H1 (cell line): ENCODE measurements at regions of chr13 and their contacts with region 1.

Region 1: GRCh38 chr13:113208424-113209335 is at the start of gene PCID2:
- DNase-seq: peak; percentile 66 to 98
- H3K4me3 ChIP-seq: peak within 1 kb of the TSS; percentile 77 to 93 (median 84)
- H3K27ac ChIP-seq: peak within 1 kb of the TSS; percentile 97
- H3K4me1 ChIP-seq: peaks cover 2 to 7% (median 3%) of the 10 kb centered on the region in 4 experiments; a peak in 5 of 7 replicates
- H3K27me3 ChIP-seq: no peaks in the 10 kb centered on the region
- CTCF ChIP-seq: 0 out of 4 replicates have a peak, but pooled peaks of 1 of the 3 experiments have one; percentile 9
- EP300 ChIP-seq: peak; percentile 47 to 84; a peak in 2 of 3 replicates
- POLR2A ChIP-seq: peak; percentile 89 to 90
- RAD21 ChIP-seq: no peak
- total RNA-seq, gene PCID2: 72.8 and 75.1 TPM in 2 replicates

Region 2: GRCh38 chr13:112685891-112686290 is 522.8 kb before region 1 on chr13:
- CTCF ChIA-PET with region 1: no interaction called
- POLR2A ChIA-PET with region 1: no interaction called
- DNase-seq: no peak
- H3K4me3 ChIP-seq: no peak overlapping the region
- H3K27ac ChIP-seq: no peak overlapping the region
- H3K4me1 ChIP-seq: peaks cover 3 to 11% (median 9%) of the 10 kb centered on the region in 4 experiments
- H3K27me3 ChIP-seq: peaks cover 0 to 2% (median 0%) of the 10 kb centered on the region in 4 experiments; a peak in 2 of 7 replicates
- CTCF ChIP-seq: no peak
- EP300 ChIP-seq: no peak
- POLR2A ChIP-seq: no peak
- RAD21 ChIP-seq: no peak

Region 3: DNA sequence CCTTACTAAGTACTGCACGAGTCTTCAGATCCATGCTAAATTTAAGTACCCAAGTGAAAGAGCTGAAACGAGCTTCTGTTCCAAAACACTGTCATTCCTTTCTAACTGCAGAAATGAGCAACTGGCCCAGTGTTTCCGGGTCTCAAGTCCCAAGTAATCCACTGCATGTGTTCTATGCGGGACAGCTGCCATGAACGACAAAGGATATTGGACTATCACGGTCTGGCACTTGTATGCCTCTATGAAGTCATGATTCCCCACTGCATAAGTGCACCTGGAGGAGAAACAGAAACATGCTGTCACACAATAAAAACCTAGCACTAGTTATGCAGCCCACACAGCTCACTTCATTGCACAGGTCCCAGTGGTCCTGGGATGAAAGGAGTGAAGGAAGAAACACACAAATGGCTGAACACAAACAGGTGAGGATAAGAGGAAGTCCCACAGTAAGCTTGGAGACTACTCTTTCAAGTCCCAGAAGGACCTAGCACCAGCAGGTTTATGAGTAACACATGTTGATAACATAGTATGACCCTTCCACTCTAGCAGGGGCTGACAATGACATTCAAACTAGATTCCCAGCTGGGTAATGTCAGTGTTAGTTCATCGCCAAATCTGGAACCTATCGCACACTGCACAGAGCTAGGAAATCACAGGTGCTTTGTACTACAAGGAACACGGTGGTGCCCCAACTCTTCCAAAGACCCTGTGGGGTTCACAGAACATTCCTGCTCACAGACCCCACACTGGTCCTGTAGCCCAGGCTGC is 11.5 kb before region 1 on chr13:
- CTCF ChIA-PET with region 1: interaction called, 6 read pairs
- POLR2A ChIA-PET with region 1: interaction called, 18 read pairs
- DNase-seq: no peak
- H3K4me3 ChIP-seq: no peak overlapping the region
- H3K27ac ChIP-seq: no peak overlapping the region
- H3K4me1 ChIP-seq: no peaks in the 10 kb centered on the region
- H3K27me3 ChIP-seq: no peaks in the 10 kb centered on the region
- CTCF ChIP-seq: no peak
- EP300 ChIP-seq: no peak
- POLR2A ChIP-seq: no peak
- RAD21 ChIP-seq: no peak

Region 4: GRCh38 chr13:113224486-113224885 is 15.8 kb after region 1 on chr13:
- CTCF ChIA-PET with region 1: interaction called, 3 read pairs
- POLR2A ChIA-PET with region 1: interaction called, 26 read pairs
- DNase-seq: no peak
- H3K4me3 ChIP-seq: no peak overlapping the region
- H3K27ac ChIP-seq: no peak overlapping the region
- H3K4me1 ChIP-seq: no peaks in the 10 kb centered on the region; a peak in 2 of 7 replicates
- H3K27me3 ChIP-seq: no peaks in the 10 kb centered on the region
- CTCF ChIP-seq: no peak
- EP300 ChIP-seq: no peak
- POLR2A ChIP-seq: no peak
- RAD21 ChIP-seq: no peak

Region 5: GRCh38 chr13:113252516-113253095 is 43.9 kb after region 1 on chr13:
- CTCF ChIA-PET with region 1: no interaction called
- POLR2A ChIA-PET with region 1: interaction called, 10 read pairs
- DNase-seq: no peak
- H3K4me3 ChIP-seq: no peak overlapping the region
- H3K27ac ChIP-seq: no peak overlapping the region
- H3K4me1 ChIP-seq: no peaks in the 10 kb centered on the region
- H3K27me3 ChIP-seq: no peaks in the 10 kb centered on the region
- CTCF ChIP-seq: no peak
- EP300 ChIP-seq: no peak
- POLR2A ChIP-seq: no peak
- RAD21 ChIP-seq: no peak

Region 6: DNA sequence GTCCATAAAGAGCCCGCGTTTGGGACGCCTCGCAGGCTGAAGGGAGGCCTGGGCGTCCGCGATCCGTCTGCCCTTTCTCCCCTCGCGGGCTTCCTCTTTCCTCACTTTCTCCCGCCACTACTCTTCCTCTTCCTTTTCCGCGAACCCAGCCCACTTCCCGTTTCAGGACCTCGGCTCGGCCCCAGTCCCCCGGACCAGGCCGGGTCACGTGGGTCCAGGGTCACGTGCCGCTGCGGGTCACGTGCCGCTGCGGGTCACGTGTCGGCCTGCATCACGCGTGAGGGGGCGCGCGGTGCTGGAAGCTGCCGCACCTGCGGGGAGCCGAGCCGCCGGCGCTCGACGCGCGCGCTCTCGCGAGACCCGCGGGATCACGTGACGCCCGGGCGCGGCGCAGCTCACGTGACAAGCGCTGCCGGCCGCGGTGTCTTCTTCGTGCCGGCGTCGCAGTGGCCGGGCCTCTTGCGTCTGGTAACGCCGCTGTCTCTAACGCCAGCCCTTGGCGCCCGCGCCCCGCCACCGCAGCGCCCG is 88.2 kb after region 1 on chr13 and contains the start of gene LAMP1:
- CTCF ChIA-PET with region 1: no interaction called
- POLR2A ChIA-PET with region 1: interaction called, 11 read pairs
- DNase-seq: peak; percentile 92 to 100
- H3K4me3 ChIP-seq: peak within 1 kb of the TSS; percentile 88 to 99 (median 92)
- H3K27ac ChIP-seq: peak within 1 kb of the TSS; percentile 60; the same call in 1 of the 2 replicates
- H3K4me1 ChIP-seq: peaks cover 0 to 3% (median 2%) of the 10 kb centered on the region in 4 experiments; a peak in 5 of 7 replicates
- H3K27me3 ChIP-seq: peaks cover 0 to 2% (median 0%) of the 10 kb centered on the region in 4 experiments; a peak in 4 of 7 replicates
- CTCF ChIP-seq: no peak
- EP300 ChIP-seq: peak; percentile 45 to 97
- POLR2A ChIP-seq: no peak; a peak in 1 of 3 replicates
- RAD21 ChIP-seq: peak in 1 of 2 experiments; percentile 23; a peak in 1 of 4 replicates
- total RNA-seq, gene LAMP1: 140 and 146 TPM in 2 replicates

Region 7: DNA sequence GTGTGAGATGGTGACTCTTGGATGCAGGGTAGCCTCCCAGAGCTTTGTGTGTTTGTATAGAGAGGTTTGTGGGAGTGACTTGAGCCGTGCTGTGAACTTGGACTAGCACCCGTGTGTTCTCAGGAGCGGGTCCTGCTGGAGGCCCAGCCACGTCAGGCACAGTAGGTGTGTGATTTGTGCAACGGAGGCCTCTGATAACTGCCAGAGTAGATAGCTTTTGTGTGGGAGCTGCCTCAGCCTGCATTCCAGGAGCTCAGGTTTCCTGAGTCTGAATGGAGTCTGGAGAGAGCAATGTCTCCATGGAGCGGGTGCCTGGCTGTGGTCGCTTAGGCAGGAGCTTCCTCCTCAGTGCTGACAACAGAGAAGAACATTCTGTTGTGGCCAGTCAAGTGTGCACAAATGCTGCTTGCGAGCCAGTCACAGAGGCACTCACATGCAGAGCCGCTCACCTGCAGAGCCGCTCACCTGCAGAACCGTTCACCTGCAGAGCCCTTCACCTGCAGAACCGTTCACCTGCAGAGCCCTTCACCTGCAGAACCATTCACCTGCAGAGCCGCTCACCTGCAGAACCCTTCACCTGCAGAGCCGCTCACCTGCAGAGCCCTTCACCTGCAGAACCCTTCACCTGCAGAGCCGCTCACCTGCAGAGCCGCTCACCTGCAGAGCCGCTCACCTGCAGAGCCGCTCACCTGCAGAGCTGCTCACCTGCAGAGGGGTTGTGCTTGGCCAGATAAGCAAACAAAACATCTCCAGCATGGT is 408.5 kb after region 1 on chr13:
- CTCF ChIA-PET with region 1: no interaction called
- POLR2A ChIA-PET with region 1: no interaction called
- DNase-seq: peak in 1 of 2 experiments; percentile 25
- H3K4me3 ChIP-seq: no peak overlapping the region
- H3K27ac ChIP-seq: peak overlapping the region; percentile 65; the same call in 1 of the 2 replicates
- H3K4me1 ChIP-seq: peaks cover 5 to 14% (median 12%) of the 10 kb centered on the region in 4 experiments; a peak in 5 of 7 replicates
- H3K27me3 ChIP-seq: no peaks in the 10 kb centered on the region; a peak in 1 of 7 replicates
- CTCF ChIP-seq: no peak
- EP300 ChIP-seq: no peak
- POLR2A ChIP-seq: no peak
- RAD21 ChIP-seq: no peak